PC-9 (cell line): ENCODE measurements at regions of chr12 and their contacts with region 1.

Region 1: DNA sequence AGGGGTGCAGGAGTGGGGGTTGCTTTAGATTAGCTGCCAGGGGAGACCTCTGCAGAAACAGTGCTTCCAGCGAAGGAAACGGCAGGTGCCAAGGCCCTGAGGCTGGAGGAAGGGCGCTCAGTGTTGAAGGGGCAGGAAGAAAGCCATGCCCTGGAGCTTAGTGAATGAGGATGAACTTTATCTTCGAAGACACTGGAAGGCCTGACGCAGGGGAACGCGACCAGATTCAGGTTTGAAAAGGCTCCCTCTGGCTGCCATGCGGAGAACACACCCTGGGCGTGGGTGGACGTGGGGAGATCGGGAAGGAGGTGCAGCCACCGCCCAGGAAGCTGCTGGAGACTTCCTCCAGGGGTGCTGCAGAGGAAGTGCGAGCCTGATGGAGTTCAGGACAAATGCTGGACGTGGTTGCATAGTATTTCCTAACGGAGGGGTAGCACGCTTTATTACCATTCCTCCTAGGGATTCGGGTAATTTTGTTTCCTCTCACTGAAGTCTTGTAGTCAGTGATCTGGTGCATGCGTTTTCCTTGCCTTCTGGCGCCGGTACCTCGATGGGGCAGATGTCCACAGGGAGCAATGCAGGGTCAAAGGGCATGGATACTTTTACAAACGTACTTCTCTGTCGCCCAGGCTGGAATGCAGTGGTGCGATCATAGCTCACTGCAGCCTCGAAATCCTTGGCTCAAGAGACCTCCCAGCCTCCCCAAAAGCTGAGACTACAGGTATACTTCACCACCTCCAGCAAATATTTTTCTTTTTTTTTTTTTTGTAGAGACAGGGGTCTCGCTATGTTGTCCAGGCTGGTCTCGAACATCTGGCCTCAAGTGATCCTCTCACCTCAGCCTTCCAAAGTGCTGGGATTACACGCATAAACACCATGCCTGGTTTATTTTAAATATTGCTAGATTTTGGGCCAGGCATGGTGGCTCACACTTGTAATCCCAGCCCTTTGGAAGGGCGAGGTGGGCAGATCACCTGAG is 26.4 kb upstream of the UBC start:
- DNase-seq: peak; percentile 86 to 88
- H3K4me3 ChIP-seq: peak overlapping the region; percentile 67; the same call in 1 of the 2 replicates
- H3K27ac ChIP-seq: peak overlapping the region; percentile 86
- H3K4me1 ChIP-seq: peaks cover 23% of the 10 kb centered on the region
- H3K27me3 ChIP-seq: no peaks in the 10 kb centered on the region
- CTCF ChIP-seq: peak; percentile 76

Region 2: DNA sequence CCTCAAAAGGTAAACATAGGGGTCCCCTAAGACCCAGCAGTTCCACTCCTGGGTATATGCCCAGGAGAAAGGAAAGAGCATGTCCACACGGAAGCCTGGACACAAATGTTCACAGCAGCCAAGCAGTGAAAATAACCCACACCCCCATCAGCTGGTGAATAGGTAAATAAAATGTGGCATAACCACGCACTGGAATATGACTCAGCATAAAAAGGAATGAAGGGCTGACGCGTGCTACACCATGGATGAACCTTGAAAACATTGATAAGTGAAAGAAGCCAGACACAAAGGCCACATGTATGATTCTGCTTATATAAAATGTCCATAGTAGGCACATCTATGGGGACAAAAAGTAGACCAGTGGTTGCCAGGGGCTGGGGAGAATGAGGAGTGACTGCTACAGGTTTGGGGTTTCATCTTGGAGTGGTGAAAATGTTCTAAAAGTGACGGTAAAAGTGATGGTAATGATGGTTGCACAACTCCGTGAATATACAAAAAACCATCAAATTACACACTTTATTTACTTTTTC is 73.4 kb before region 1 on chr12:
- CTCF ChIA-PET with region 1: no interaction called
- POLR2A ChIA-PET with region 1: interaction called, 15 read pairs
- intact Hi-C with region 1: loop called (anchors 2 kb)
- DNase-seq: peak in 1 of 2 experiments; percentile 28
- H3K4me3 ChIP-seq: no peak overlapping the region
- H3K27ac ChIP-seq: no peak overlapping the region
- H3K4me1 ChIP-seq: peaks cover 20% of the 10 kb centered on the region
- H3K27me3 ChIP-seq: no peaks in the 10 kb centered on the region
- CTCF ChIP-seq: no peak

Region 3: DNA sequence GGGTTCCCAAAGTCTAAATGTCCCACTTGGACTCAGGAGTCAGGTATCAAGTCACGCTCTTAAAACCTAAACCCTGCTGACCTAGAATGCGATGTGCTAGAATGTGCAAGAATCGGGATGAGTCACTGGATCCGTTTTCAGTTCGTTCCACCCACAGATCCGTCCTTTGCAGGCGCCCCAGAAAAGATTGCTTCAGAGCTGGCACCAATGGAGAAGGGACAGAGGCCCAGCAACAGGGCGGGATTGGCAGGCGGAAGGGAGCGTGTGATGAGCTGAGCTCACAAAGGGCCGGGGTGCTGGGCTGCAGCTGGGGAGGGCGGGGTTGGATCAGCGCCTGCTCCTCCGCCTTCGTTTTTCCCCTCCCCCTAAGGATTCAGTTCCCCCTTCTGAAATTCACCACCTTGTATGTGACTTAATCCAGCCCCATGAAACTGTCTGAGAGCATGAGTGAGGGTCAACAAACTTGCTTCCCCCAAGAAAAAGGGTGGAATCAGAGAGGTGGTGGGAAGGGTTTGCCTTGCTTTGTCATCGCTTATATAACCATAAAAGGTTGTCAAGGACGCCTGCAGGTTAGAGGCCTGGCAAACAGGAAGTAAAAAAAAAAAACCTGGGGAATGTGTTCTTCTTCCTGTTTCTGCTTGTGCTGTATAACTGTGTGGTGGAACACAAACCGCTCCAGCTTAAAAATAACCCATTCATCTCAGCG is 23.6 kb before region 1 on chr12:
- CTCF ChIA-PET with region 1: interaction called, 10 read pairs
- POLR2A ChIA-PET with region 1: interaction called, 15 read pairs
- intact Hi-C with region 1: loop called (anchors 1 kb)
- DNase-seq: peak; percentile 95 to 99
- H3K4me3 ChIP-seq: peak overlapping the region; percentile 100
- H3K27ac ChIP-seq: peak overlapping the region; percentile 100
- H3K4me1 ChIP-seq: peaks cover 54% of the 10 kb centered on the region
- H3K27me3 ChIP-seq: no peaks in the 10 kb centered on the region
- CTCF ChIP-seq: 0 out of 2 replicates have a peak, but pooled peaks have one; percentile 5

Region 4: DNA sequence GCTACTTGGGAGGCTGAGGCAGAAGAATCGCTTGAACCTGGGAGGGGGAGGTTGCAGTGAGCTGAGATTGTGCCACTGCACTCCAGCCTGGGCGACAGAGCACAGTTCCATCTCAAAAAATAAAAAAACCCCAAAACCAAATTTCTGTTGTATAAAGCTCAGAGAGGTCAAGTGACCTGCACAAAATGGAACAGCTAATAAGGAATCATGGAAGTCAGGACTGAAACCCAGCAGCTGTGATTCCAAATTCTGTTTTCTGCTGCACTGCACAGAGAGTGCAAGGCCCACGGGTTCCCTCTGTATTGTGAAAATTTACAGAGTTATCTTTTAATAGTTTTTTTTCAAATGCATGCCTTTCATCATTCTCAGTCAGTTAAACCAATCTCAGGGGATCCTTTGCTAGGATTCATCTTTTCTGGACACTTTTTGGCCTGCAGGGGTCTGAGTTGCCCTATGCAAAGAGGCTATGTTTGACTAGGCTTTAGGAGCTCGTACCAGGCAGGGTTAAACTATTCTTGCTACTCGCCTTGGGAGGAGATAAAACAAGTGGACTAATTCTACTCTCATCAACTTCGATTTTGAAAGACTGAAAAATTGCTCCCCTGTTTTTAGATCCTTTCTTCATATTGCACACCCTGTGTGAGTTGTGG is 98.3 kb after region 1 on chr12:
- CTCF ChIA-PET with region 1: no interaction called
- POLR2A ChIA-PET with region 1: no interaction called
- intact Hi-C with region 1: no loop called
- DNase-seq: no peak
- H3K4me3 ChIP-seq: no peak overlapping the region
- H3K27ac ChIP-seq: no peak overlapping the region
- H3K4me1 ChIP-seq: no peaks in the 10 kb centered on the region
- H3K27me3 ChIP-seq: no peaks in the 10 kb centered on the region
- CTCF ChIP-seq: no peak